ENCODE measurements at regions of chr4 and their contacts with region 1.

Region 1: DNA sequence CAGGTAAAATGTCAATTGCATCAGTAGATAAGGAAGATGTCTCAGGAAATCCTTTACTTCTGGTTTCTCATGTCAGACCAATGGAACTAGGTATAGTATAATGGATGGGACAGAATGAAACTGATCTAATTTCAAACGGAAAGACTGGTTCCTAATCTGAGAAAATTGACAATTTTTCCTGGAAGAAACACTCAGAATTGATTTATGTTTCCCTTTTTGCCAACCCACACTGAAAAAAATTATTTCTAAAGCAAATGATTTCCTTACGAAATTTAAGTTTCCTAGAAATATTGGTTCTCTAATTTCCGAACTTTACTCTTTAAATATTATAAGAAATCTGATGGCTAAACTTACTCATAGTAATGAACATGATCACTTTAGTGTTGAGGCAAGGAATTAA is 19.1 kb downstream of the PPAT start:
- DNase-seq: no peak
- ATAC-seq: no peak
- H3K4me3 ChIP-seq: no peak overlapping the region
- H3K4me3 Mint-ChIP-seq: no peak overlapping the region
- H3K27ac ChIP-seq: no peak overlapping the region
- H3K27ac Mint-ChIP-seq: no peak overlapping the region
- H3K4me1 ChIP-seq: no peaks in the 10 kb centered on the region
- H3K4me1 Mint-ChIP-seq: peaks cover 6 to 20% (median 11%) of the 10 kb centered on the region in 7 donors
- H3K27me3 ChIP-seq: no peaks in the 10 kb centered on the region
- H3K27me3 Mint-ChIP-seq: no peaks in the 10 kb centered on the region

Region 2: DNA sequence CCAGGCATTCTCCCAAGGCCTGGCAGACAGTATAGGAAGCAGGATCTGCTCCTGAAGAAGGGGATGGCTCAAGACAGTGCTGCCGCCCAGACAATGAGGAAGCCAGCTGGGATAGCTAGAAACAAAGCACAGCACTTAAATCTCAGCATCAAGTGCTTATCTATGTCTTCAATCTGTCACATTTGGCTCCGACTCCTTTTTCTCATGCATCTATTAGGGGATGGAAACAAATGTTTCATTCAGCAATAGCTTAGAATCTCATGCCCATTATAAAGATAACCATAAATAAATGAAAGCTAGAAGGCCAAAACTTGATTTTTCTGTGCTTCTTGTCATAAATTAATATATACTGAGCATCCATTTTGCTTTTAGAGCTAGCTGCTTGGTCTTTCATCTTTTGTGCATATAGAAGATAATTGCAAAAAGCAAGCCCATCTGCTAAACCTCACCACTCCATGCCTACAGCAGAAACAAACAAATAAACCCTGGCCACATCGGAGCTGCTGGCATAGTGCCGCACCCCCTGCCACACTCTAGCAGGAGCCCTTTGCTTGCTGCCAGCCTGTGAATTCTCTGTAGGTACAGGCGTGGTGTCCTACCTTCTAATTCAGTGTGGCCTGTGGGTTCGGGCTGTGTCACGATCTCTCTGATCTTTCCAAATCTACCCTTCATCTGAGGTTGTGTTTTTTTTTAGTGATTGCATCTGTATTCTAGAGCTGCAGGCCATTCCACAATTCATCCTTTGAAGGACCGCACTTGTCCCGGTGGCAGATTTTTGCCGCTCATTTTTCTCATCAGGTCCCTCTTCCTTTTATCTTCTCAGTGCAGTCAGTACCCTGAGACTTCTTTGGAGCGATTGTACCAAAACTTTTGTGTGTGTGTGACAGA is 104.8 kb before region 1 on chr4:
- CTCF ChIA-PET with region 1: no interaction called
- POLR2A ChIA-PET with region 1: no interaction called
- intact Hi-C with region 1: no loop called
- DNase-seq: no peak
- ATAC-seq: no peak
- H3K4me3 ChIP-seq: no peak overlapping the region
- H3K4me3 Mint-ChIP-seq: no peak overlapping the region
- H3K27ac ChIP-seq: no peak overlapping the region
- H3K27ac Mint-ChIP-seq: no peak overlapping the region
- H3K4me1 ChIP-seq: no peaks in the 10 kb centered on the region
- H3K4me1 Mint-ChIP-seq: no peaks in the 10 kb centered on the region
- H3K27me3 ChIP-seq: no peaks in the 10 kb centered on the region
- H3K27me3 Mint-ChIP-seq: peaks cover 0 to 4% (median 0%) of the 10 kb centered on the region in 5 donors

Region 3: DNA sequence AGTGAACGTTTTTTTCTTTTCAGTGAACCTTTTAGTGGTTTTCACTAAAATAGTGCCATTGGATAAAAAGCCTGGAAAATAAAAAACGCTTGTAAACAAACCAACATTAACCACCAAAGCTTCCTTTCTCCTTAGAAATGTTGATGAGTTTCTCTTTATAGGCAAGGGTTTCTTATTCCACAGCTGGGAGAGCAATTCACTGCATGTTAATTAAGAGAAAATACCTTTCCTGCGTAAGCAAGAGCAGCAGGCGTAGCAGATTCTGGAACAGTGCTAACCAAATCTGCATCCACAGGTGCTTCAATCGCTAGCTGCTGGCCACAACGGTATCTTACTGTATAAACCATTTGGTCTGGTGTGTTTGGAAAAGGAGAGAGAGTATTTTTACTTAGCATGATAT is 15.8 kb before region 1 on chr4:
- CTCF ChIA-PET with region 1: no interaction called
- POLR2A ChIA-PET with region 1: no interaction called
- intact Hi-C with region 1: loop called in 1 of 2 experiments (anchors 1 kb)
- DNase-seq: no peak
- ATAC-seq: no peak
- H3K4me3 ChIP-seq: no peak overlapping the region
- H3K4me3 Mint-ChIP-seq: no peak overlapping the region
- H3K27ac ChIP-seq: no peak overlapping the region
- H3K27ac Mint-ChIP-seq: no peak overlapping the region
- H3K4me1 ChIP-seq: no peaks in the 10 kb centered on the region
- H3K4me1 Mint-ChIP-seq: no peaks in the 10 kb centered on the region
- H3K27me3 ChIP-seq: no peaks in the 10 kb centered on the region
- H3K27me3 Mint-ChIP-seq: no peaks in the 10 kb centered on the region

Region 4: DNA sequence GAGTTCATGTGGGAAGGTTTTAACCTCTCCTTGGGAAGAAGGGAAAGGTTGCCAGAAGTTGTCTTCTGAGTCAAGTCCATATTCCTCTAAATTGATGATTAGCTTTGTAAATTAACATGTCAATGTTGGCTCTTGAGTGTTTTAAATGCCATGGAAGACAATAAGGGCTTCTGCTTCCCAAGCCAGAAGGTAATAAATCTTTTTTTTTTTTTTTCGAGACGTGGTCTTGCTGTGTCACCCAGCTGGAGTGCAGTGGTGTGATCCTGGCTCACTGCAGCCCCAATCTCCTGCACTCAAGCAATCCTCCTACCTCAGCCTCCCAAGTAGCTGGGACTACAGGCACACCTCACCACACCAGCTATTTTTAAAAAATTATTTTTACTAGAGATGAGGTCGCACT is 486.4 kb after region 1 on chr4:
- CTCF ChIA-PET with region 1: no interaction called
- POLR2A ChIA-PET with region 1: no interaction called
- intact Hi-C with region 1: no loop called
- DNase-seq: no peak
- ATAC-seq: no peak
- H3K4me3 ChIP-seq: no peak overlapping the region
- H3K4me3 Mint-ChIP-seq: no peak overlapping the region
- H3K27ac ChIP-seq: no peak overlapping the region
- H3K27ac Mint-ChIP-seq: no peak overlapping the region
- H3K4me1 ChIP-seq: peaks cover 0 to 4% of the 10 kb centered on the region in 2 donors
- H3K4me1 Mint-ChIP-seq: peaks cover 8 to 18% (median 15%) of the 10 kb centered on the region in 7 donors
- H3K27me3 ChIP-seq: no peaks in the 10 kb centered on the region
- H3K27me3 Mint-ChIP-seq: peaks cover 0 to 20% (median 0%) of the 10 kb centered on the region in 5 donors